ENCODE measurements at regions of chr10 and their contacts with region 1.

Region 1: GRCh38 chr10:3668276-3668965 is 116.6 kb downstream of the KLF6 start:
- DNase-seq: peak; percentile 40 to 88 (median 66)
- ATAC-seq: peak; percentile 94
- H3K4me3 ChIP-seq: peak overlapping the region; percentile 43 to 64
- H3K4me3 Mint-ChIP-seq: peak overlapping the region; percentile 88
- H3K27ac ChIP-seq: peak overlapping the region; percentile 39 to 78
- H3K27ac Mint-ChIP-seq: peak overlapping the region; percentile 94
- H3K4me1 ChIP-seq: peaks cover 33% of the 10 kb centered on the region
- H3K4me1 Mint-ChIP-seq: peaks cover 43% of the 10 kb centered on the region
- H3K27me3 ChIP-seq: no peaks in the 10 kb centered on the region
- H3K27me3 Mint-ChIP-seq: no peaks in the 10 kb centered on the region
- CTCF ChIP-seq: no peak

Region 2: GRCh38 chr10:3172446-3173170 is 495.8 kb before region 1 on chr10 and contains the start of gene PITRM1:
- CTCF ChIA-PET with region 1: no interaction called
- POLR2A ChIA-PET with region 1: no interaction called
- intact Hi-C with region 1: loop called in 1 of 2 experiments (anchors 10 kb)
- DNase-seq: peak; percentile 97 to 100 (median 99)
- ATAC-seq: peak; percentile 87
- H3K4me3 ChIP-seq: peak within 1 kb of the TSS; percentile 73 to 98
- H3K4me3 Mint-ChIP-seq: peak within 1 kb of the TSS; percentile 83
- H3K27ac ChIP-seq: peak within 1 kb of the TSS; percentile 71 to 91
- H3K27ac Mint-ChIP-seq: peak within 1 kb of the TSS; percentile 93
- H3K4me1 ChIP-seq: peaks cover 12% of the 10 kb centered on the region
- H3K4me1 Mint-ChIP-seq: peaks cover 25% of the 10 kb centered on the region
- H3K27me3 ChIP-seq: no peaks in the 10 kb centered on the region
- H3K27me3 Mint-ChIP-seq: no peaks in the 10 kb centered on the region
- CTCF ChIP-seq: no peak
- total RNA-seq, gene PITRM1: 73.5 to 82.5 TPM

Region 3: DNA sequence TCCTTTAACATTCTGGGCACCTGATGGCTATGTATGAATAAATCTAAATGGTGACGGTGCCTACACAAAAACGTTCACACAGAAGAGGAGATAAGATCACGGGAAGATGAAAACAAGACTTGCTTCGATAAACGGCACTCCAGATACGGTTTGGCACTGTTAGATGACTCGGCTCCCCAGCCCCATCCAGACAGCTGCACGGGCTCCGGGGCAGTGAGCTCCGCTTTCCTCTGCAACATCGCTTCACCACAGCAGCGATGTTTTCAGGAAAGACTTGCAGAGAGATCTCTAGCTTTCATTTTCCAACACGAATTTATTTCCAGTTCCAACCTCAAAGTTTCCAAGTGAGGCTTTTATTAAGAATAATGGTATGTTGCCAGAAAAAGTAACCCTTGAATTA is 15.5 kb before region 1 on chr10:
- CTCF ChIA-PET with region 1: no interaction called
- POLR2A ChIA-PET with region 1: no interaction called
- intact Hi-C with region 1: no loop called
- DNase-seq: peak in 1 of 9 experiments; percentile 29
- ATAC-seq: no peak
- H3K4me3 ChIP-seq: no peak overlapping the region
- H3K4me3 Mint-ChIP-seq: peak overlapping the region; percentile 57
- H3K27ac ChIP-seq: no peak overlapping the region
- H3K27ac Mint-ChIP-seq: no peak overlapping the region
- H3K4me1 ChIP-seq: peaks cover 4% of the 10 kb centered on the region
- H3K4me1 Mint-ChIP-seq: peaks cover 20% of the 10 kb centered on the region
- H3K27me3 ChIP-seq: no peaks in the 10 kb centered on the region
- H3K27me3 Mint-ChIP-seq: peaks cover 25% of the 10 kb centered on the region
- CTCF ChIP-seq: no peak

Region 4: DNA sequence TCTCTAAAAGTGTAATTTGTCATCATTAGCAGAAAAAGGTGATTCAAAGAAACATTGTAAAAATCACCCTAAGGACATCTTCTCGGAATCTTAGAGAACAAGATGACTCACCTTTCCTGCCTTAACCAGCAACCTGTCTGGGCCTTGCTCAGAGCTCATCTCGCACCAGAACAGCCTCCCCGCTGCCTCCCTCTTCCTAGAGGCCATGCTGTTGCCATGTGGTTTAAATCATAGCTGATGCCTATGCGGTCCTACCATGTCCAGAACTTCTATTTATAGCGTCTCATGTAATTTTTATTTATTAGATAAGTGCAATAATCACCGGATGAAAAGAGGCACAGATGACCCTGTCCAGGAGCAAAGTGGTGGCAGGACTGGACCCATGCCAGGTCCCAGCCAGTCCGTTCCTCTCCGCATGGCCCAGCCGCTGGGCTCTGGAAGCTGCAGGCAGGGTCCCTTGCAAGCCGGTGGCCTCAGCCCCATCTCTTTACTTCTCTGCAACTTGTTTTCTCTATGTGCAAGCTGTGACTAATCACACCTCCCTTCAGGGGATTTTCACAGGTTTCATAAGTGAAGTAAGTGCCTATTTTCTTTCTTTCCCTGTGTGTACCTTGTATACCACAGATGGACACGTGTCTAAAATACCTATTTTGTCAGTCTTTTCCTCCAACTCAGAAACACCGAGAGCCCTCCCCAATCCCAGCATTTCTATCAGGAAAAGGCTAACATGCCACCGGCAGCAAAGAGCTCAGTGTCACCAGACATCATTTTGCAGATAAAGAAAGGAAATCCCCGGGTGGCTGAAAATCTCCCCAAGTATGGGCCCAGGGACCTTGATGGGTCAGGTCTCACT is 89.4 kb after region 1 on chr10:
- CTCF ChIA-PET with region 1: no interaction called
- POLR2A ChIA-PET with region 1: no interaction called
- intact Hi-C with region 1: loop called (anchors 5 kb)
- DNase-seq: peak in 7 of 9 experiments; percentile 43 to 86 (median 70)
- ATAC-seq: peak; percentile 82
- H3K4me3 ChIP-seq: no peak overlapping the region
- H3K4me3 Mint-ChIP-seq: peak overlapping the region; percentile 50
- H3K27ac ChIP-seq: peak overlapping the region; percentile 16 to 86
- H3K27ac Mint-ChIP-seq: peak overlapping the region; percentile 95
- H3K4me1 ChIP-seq: peaks cover 8% of the 10 kb centered on the region
- H3K4me1 Mint-ChIP-seq: peaks cover 31% of the 10 kb centered on the region
- H3K27me3 ChIP-seq: no peaks in the 10 kb centered on the region
- H3K27me3 Mint-ChIP-seq: no peaks in the 10 kb centered on the region
- CTCF ChIP-seq: no peak